ENCODE measurements at regions of chr1 and their contacts with region 1.

Region 1: DNA sequence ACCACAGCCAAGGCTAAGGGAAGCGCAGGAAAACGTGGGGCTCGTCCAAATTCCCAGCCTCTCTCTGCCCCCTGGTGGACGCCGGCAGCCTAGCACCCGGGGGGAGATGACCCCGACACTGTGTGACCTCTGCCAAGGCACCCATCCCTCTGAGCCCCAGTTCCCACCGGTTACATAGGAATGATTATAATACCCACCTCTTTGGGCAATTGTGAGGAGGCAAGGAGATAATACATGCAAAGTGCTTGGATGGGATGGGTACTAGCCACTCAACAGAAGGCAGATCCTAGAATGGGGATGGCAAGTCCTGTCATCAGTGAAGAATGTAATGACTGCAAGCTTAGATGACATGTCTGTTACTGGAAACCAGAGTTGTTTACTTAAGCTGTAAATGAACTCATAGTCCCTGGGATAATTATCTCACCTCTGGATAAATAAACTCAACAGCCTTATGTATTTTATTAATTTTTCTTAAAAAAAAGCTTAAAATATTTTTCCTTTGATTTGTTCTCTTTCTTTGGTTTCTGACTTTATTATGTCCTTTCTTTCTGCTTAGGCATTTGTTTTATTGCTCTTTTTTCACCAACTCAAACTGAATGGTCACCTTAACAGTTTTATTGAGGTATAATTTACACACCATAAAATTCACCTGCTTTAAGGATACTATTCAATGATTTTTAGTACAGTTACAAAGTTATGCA is 11.3 kb upstream of the BMP8B start:
- DNase-seq: peak; percentile 75 to 77
- ATAC-seq: peak; percentile 73 to 87 (median 74)
- H3K4me3 ChIP-seq: peak overlapping the region; percentile 24
- H3K4me3 Mint-ChIP-seq: peak overlapping the region; percentile 83
- H3K27ac ChIP-seq: peak overlapping the region; percentile 81
- H3K27ac Mint-ChIP-seq: peak overlapping the region; percentile 89 to 93
- H3K4me1 ChIP-seq: peaks cover 10% of the 10 kb centered on the region
- H3K4me1 Mint-ChIP-seq: peaks cover 9 to 10% of the 10 kb centered on the region in 2 donors
- H3K27me3 ChIP-seq: no peaks in the 10 kb centered on the region
- H3K27me3 Mint-ChIP-seq: no peaks in the 10 kb centered on the region
- CTCF ChIP-seq: peak; percentile 94

Region 2: DNA sequence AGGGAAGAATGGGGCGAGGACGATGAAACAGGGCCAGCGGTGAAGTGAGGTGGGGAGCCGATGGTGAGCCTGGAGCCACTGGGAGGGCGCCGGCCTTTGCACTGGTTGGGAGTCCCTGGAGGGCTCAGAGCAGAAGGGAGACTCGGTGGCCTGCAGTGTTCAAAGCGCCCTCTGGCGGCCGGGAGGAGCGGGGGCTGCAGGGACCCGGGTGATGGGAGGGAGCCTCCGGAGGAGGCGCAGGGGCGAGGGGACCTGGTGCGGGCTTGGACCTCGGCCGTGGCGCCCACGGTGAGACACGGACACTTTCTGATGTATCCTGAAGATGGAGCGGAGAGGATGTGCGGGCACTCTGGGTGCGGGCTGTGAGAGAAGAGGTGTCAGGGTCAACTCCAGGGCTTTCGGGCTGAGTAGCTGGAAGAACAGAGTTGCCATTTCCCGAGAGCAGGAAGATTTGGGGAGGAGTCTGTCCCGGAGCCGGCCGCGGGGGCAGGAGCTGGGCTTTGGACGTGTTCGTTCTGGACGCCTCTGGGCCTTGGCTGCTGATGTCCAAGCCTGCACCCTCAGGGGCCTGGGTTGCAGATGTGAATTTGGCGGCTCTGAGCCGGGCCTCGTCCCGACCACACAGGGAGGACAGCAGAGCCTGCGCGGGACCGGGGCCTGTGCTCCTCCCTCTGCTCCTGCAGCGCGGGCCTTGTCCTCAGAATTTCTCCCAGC is 190.1 kb before region 1 on chr1:
- intact Hi-C with region 1: loop called (anchors 1 kb)
- DNase-seq: peak; percentile 65 to 87
- ATAC-seq: peak; percentile 80 to 90 (median 83)
- H3K4me3 ChIP-seq: no peak overlapping the region
- H3K4me3 Mint-ChIP-seq: peak overlapping the region; percentile 35
- H3K27ac ChIP-seq: no peak overlapping the region
- H3K27ac Mint-ChIP-seq: no peak overlapping the region
- H3K4me1 ChIP-seq: peaks cover 7% of the 10 kb centered on the region
- H3K4me1 Mint-ChIP-seq: peaks cover 10% of the 10 kb centered on the region in 2 donors
- H3K27me3 ChIP-seq: peaks cover 2% of the 10 kb centered on the region
- H3K27me3 Mint-ChIP-seq: peaks cover 5 to 6% of the 10 kb centered on the region in 2 donors
- CTCF ChIP-seq: peak; percentile 80

Region 3: DNA sequence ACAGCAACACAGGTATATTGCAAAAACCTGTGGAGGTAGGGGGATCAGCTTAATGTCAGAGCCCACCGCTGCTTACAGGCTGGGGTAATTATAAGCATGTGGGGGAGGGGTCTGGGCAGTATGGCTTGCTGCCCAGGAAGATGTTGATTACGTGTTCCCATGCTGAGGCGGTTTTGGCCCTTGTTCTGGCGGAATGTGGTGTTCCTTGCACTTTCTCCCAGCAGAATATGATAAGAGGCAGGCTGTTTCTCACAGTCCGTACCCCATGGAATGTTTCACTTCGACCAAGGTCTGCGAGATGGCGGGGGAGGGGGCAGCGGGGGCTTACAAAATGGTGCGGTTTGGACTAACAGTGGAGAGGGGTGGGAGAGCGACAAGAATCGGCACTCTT is 98.9 kb before region 1 on chr1:
- intact Hi-C with region 1: loop called (anchors 1 kb)
- DNase-seq: no peak
- ATAC-seq: no peak
- H3K4me3 ChIP-seq: no peak overlapping the region
- H3K4me3 Mint-ChIP-seq: no peak overlapping the region
- H3K27ac ChIP-seq: no peak overlapping the region
- H3K27ac Mint-ChIP-seq: no peak overlapping the region
- H3K4me1 ChIP-seq: no peaks in the 10 kb centered on the region
- H3K4me1 Mint-ChIP-seq: no peaks in the 10 kb centered on the region
- H3K27me3 ChIP-seq: no peaks in the 10 kb centered on the region
- H3K27me3 Mint-ChIP-seq: peaks cover 30 to 32% of the 10 kb centered on the region in 2 donors
- CTCF ChIP-seq: no peak